Lower leg skin (tissue), 4 donors: ENCODE measurements at regions of chr10 and their contacts with region 1.

Region 1: GRCh38 chr10:49518982-49519578 is 19.8 kb downstream of the ERCC6 start:
- DNase-seq: no peak
- H3K4me3 ChIP-seq: no peak overlapping the region
- CTCF ChIP-seq: no peak
- POLR2A ChIP-seq: no peak

Region 2: GRCh38 chr10:48656241-48656913 is 862.7 kb before region 1 on chr10:
- intact Hi-C with region 1: loop called (anchors 5 kb)
- DNase-seq: peak; percentile 82 to 98
- H3K4me3 ChIP-seq: no peak overlapping the region
- CTCF ChIP-seq: peak in 1 of 3 donors; percentile 44
- POLR2A ChIP-seq: no peak

Region 3: GRCh38 chr10:49407552-49408137 is 111.4 kb before region 1 on chr10:
- intact Hi-C with region 1: loop called (anchors 5 kb)
- DNase-seq: peak; percentile 68 to 94
- H3K4me3 ChIP-seq: no peak overlapping the region
- CTCF ChIP-seq: peak in 1 of 3 donors; percentile 24
- POLR2A ChIP-seq: no peak